ENCODE measurements at regions of chr11 and their contacts with region 1.

Region 1: GRCh38 chr11:11966826-11967668 is 41.4 kb downstream of the DKK3 start:
- DNase-seq: peak; percentile 83
- H3K4me3 Mint-ChIP-seq: no peak overlapping the region
- H3K27ac Mint-ChIP-seq: no peak overlapping the region
- H3K4me1 Mint-ChIP-seq: peaks cover 2% of the 10 kb centered on the region
- H3K27me3 Mint-ChIP-seq: no peaks in the 10 kb centered on the region

Region 2: GRCh38 chr11:11946180-11946579 is 20.9 kb before region 1 on chr11:
- CTCF ChIA-PET with region 1: interaction called, 14 read pairs
- POLR2A ChIA-PET with region 1: no interaction called
- intact Hi-C with region 1: no loop called
- DNase-seq: no peak
- H3K4me3 Mint-ChIP-seq: no peak overlapping the region
- H3K27ac Mint-ChIP-seq: no peak overlapping the region
- H3K4me1 Mint-ChIP-seq: no peaks in the 10 kb centered on the region
- H3K27me3 Mint-ChIP-seq: no peaks in the 10 kb centered on the region

Region 3: DNA sequence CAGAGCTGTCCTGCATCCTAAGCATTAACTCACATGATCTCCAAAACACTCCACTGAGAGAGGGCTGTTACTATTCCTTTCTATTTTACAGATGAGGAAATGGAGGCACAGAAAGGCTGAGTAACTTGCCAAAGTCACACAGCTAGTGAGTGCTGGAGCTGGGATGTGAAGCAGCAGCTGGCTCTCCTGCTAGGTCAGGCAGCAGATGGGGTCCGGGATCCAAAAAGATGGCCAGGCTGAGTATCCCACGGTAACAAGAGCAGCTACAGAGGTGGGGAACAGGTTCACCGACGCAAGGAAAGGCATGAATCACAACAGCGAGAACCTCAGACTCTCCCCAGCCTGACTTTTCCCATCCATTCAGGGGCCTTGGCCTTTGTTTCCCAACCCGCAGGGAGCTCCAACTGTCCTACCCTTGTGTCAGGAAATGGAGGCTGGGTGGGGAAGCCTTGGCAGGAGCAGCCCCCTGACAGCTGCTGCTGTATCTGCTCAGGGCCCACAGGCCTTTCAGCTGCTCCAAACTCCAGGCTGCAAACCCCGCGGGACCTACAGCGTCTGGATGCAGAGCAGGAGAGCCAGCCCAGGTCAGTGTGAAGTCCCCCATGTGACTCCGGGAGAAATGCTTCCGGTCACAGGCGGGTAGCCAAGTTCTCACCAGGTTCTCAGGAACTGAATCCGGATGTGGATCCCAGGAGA is 11.9 kb after region 1 on chr11:
- CTCF ChIA-PET with region 1: interaction called, 13 read pairs
- POLR2A ChIA-PET with region 1: interaction called, 4 read pairs
- intact Hi-C with region 1: no loop called
- DNase-seq: no peak
- H3K4me3 Mint-ChIP-seq: no peak overlapping the region
- H3K27ac Mint-ChIP-seq: no peak overlapping the region
- H3K4me1 Mint-ChIP-seq: peaks cover 8% of the 10 kb centered on the region
- H3K27me3 Mint-ChIP-seq: no peaks in the 10 kb centered on the region

Region 4: DNA sequence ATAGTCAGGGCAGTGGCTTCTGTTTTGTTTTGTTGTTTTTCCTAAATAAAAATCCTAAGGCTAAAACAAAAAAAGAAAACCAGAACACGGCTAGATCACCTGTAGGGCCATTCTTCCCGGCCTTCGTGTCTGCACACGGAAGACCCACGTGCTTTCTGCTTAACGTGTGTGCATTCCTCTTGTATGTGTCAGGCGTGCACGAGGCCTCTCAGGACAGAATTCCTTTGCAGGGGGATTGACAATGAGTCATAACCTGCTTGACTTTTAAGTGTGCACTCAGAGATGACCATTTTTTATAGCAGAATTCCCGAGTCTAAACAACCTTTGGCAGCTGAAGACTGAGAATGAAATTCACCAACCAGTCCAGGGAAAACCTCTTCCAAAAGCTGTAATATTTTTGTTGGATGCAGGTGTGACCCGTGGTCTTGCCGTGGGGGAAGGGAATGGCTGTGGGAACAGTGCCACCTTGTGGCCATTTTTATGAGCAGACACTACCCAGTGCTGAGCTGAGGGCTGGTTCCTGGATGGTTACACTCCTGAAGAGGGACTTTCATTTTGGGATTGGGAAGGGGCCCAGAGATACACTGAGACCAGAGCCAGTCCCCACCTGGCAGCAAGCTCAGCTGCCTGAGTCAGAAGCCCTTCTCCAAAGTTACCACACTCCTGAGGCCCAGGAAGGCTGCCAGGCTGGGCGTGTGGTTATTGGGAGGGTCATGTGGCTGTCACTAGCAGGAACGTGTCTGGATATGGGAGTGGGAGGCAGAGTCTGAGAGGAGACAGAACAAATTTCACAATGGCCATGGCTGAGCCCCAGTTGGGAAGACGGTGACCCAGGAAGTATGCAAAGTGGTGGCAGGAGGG is 77.1 kb after region 1 on chr11:
- CTCF ChIA-PET with region 1: interaction called, 20 read pairs
- POLR2A ChIA-PET with region 1: no interaction called
- intact Hi-C with region 1: no loop called
- DNase-seq: peak; percentile 76
- H3K4me3 Mint-ChIP-seq: no peak overlapping the region
- H3K27ac Mint-ChIP-seq: no peak overlapping the region
- H3K4me1 Mint-ChIP-seq: peaks cover 4% of the 10 kb centered on the region
- H3K27me3 Mint-ChIP-seq: peaks cover 1% of the 10 kb centered on the region

Measured in activated CD4-positive, alpha-beta memory T cell treated with anti-CD3 and anti-CD28 coated beads for 36 hours (primary cell).